Activated CD4-positive, alpha-beta T cell treated with anti-CD3 and anti-CD28 coated beads for 36 hours (primary cell): ENCODE measurements at regions of chr19 and their contacts with region 1.

Region 1: GRCh38 chr19:2782936-2783780 is at the start of gene SGTA:
- DNase-seq: peak; percentile 98
- ATAC-seq: peak; percentile 84
- H3K4me3 Mint-ChIP-seq: peak within 1 kb of the TSS; percentile 91
- H3K27ac Mint-ChIP-seq: peak within 1 kb of the TSS; percentile 98
- H3K4me1 Mint-ChIP-seq: peaks cover 58% of the 10 kb centered on the region
- H3K27me3 Mint-ChIP-seq: no peaks in the 10 kb centered on the region
- total RNA-seq, gene SGTA: 53.0 to 62.2 TPM

Region 2: DNA sequence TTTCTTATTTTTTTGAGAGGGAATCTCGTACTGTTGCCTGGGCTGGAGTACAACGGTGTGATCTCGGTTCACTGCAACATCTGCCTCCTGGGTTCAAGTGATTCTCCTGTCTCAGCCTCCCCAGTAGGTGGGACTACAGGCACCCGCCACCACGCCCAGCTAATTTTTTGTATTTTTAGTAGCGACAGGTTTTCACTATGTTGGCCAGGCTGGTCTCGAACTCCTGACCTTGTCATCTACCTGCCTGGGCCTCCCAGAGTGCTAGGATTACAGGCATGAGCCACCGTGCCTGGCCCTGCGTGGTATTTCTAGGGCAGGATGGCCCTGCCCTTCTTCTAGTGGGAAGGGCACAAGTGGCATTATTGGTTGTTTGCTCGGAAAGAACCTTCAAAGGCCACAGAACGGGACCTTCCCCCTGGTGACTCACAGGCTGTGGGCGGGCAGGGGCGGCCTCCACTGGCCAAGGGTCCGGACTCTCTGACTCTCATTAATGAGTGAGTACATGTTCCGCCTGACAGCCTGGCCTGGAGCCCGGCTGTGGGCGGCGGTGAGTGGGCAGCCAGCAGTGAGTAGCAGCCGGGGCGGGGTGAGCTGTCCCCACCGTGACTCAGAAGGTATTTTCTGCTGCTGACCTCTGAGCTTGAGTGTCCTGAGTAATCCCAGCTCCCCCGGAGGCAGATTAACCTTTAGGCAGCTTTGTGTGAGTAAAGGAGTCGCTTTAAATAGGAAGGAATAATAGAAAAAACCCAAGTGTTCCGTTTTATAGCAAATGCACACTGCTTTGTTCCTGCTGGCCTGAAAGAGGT is 614.3 kb before region 1 on chr19:
- CTCF ChIA-PET with region 1: no interaction called
- POLR2A ChIA-PET with region 1: no interaction called
- intact Hi-C with region 1: loop called in 1 of 2 experiments (anchors 10 kb)
- DNase-seq: peak; percentile 90
- ATAC-seq: peak; percentile 53
- H3K4me3 Mint-ChIP-seq: peak overlapping the region; percentile 43
- H3K27ac Mint-ChIP-seq: peak overlapping the region; percentile 72
- H3K4me1 Mint-ChIP-seq: peaks cover 71% of the 10 kb centered on the region
- H3K27me3 Mint-ChIP-seq: no peaks in the 10 kb centered on the region

Region 3: GRCh38 chr19:2475702-2476450 is 307.3 kb before region 1 on chr19 and contains the start of gene GADD45B:
- CTCF ChIA-PET with region 1: no interaction called
- POLR2A ChIA-PET with region 1: interaction called, 4 read pairs
- intact Hi-C with region 1: loop called in 1 of 2 experiments (anchors 1 kb)
- DNase-seq: peak; percentile 98
- ATAC-seq: peak; percentile 53
- H3K4me3 Mint-ChIP-seq: peak within 1 kb of the TSS; percentile 94
- H3K27ac Mint-ChIP-seq: peak within 1 kb of the TSS; percentile 90
- H3K4me1 Mint-ChIP-seq: peaks cover 22% of the 10 kb centered on the region
- H3K27me3 Mint-ChIP-seq: no peaks in the 10 kb centered on the region
- total RNA-seq, gene GADD45B: 57.7 to 71.2 TPM

Region 4: DNA sequence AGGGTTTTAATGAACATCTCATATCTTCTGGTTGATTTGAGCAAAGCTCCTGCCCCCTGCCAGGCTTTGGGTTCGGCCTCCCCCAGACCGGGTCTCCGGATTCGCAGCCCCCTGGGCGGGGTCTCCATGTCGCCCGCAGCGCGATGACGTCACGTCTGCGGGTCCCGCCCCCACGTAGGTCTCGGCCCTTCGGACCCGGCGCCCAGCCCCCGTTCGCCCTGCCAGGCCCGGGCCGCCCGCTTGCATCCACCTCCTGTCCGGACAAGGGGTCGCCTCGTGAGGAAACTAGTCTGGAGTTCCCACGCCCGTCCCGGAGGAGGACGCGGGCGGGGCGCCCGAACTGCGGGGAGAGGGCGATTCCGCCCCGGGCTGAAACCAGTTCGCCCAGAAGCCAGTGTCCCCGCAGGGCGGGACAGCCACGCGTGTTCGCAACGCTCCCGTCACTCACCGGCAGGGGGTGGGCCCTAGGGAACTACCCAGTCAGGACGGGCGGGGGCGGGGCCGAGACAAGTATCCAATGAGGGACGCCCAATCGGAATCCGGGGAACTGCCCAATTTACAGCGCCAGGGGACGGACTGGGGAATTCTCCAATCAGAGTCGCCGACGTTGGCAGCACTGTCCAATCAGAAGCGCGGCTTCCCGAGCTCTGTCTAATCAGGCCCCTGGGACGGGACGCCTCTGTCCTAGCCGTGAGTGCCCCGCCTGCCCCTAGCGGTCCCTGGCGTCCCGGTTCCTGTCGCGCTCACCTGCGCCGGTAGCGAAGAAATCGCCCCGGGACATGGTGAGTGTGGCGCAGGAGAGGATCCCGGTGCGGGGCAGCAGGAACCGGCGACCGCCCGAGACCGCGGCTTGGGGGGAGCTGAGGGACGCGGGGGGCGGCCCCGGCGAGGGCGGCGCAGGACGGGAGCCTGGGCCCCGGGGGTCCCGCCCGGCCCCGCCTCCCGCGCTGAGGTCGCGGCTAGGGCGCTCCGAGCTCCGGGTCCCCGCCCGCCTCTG is 57.9 kb after region 1 on chr19 and contains the start of gene ZNF555:
- CTCF ChIA-PET with region 1: interaction called, 3 read pairs
- POLR2A ChIA-PET with region 1: no interaction called
- intact Hi-C with region 1: loop called in 1 of 2 experiments (anchors 1 kb)
- DNase-seq: peak; percentile 99
- ATAC-seq: peak; percentile 100
- H3K4me3 Mint-ChIP-seq: peak within 1 kb of the TSS; percentile 77
- H3K27ac Mint-ChIP-seq: peak within 1 kb of the TSS; percentile 55
- H3K4me1 Mint-ChIP-seq: peaks cover 11% of the 10 kb centered on the region
- H3K27me3 Mint-ChIP-seq: no peaks in the 10 kb centered on the region
- total RNA-seq, gene ZNF555: 1.9 TPM

Region 5: GRCh38 chr19:3035542-3036118 is 252.5 kb after region 1 on chr19:
- CTCF ChIA-PET with region 1: no interaction called
- POLR2A ChIA-PET with region 1: no interaction called
- intact Hi-C with region 1: loop called in 1 of 2 experiments (anchors 1 kb)
- DNase-seq: peak; percentile 97
- ATAC-seq: peak; percentile 94
- H3K4me3 Mint-ChIP-seq: peak overlapping the region; percentile 83
- H3K27ac Mint-ChIP-seq: peak overlapping the region; percentile 96
- H3K4me1 Mint-ChIP-seq: peaks cover 19% of the 10 kb centered on the region
- H3K27me3 Mint-ChIP-seq: no peaks in the 10 kb centered on the region

Region 6: DNA sequence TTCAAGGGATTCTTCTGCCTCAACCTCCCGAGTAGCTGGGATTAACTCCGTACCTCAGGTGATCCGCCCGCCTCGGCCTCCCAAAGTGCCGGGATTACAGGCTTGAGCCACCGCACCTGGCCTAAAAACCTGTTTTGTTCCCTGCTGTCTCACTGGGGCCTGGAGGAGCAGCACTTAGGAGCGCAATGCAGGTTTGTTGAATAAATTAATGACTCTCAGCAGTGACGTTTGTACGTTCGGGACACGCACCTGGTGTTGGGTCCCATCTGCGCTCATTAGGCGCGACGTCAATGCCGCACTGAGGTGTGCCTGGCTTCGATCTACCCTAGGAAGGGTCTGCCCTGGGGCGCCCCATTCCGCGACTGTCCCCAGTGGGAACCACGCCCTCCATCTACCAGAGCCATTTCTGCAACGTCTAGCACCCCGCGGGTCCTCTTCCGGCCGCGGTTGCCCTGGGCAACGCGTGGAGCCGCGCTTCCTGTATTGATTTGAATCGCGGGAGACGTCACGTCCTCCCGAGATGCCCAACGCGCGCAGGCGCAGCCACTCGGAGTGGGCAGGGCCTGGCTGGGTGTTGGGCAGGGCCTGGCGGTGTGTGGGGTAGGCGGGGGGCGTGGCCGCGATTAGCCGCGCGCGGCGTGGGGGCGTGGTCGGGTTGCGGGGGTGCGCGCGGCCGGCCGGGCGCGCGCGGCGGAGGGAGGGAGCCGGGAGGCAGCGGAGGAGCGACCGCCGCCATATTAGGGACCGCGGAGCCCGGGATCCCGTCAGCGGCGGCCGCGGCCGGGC is 722.6 kb after region 1 on chr19 and contains the start of gene FZR1:
- CTCF ChIA-PET with region 1: interaction called, 3 read pairs
- POLR2A ChIA-PET with region 1: interaction called, 3 read pairs
- intact Hi-C with region 1: loop called in 1 of 2 experiments (anchors 1 kb)
- DNase-seq: peak; percentile 100
- ATAC-seq: peak; percentile 92
- H3K4me3 Mint-ChIP-seq: peak within 1 kb of the TSS; percentile 84
- H3K27ac Mint-ChIP-seq: peak within 1 kb of the TSS; percentile 86
- H3K4me1 Mint-ChIP-seq: peaks cover 45% of the 10 kb centered on the region
- H3K27me3 Mint-ChIP-seq: no peaks in the 10 kb centered on the region
- total RNA-seq, gene FZR1: 40.8 to 50.7 TPM